CD4-positive, alpha-beta T cell (primary cell): ENCODE measurements at regions of chr1 and their contacts with region 1.

Region 1: GRCh38 chr1:172917972-172918371 is 132.8 kb downstream of the TNFSF18 start:
- DNase-seq: no peak
- ATAC-seq: no peak
- H3K4me3 ChIP-seq: no peak overlapping the region
- H3K4me3 Mint-ChIP-seq: no peak overlapping the region
- H3K27ac ChIP-seq: no peak overlapping the region
- H3K27ac Mint-ChIP-seq: no peak overlapping the region
- H3K4me1 ChIP-seq: no peaks in the 10 kb centered on the region
- H3K4me1 Mint-ChIP-seq: no peaks in the 10 kb centered on the region
- H3K27me3 ChIP-seq: no peaks in the 10 kb centered on the region
- H3K27me3 Mint-ChIP-seq: no peaks in the 10 kb centered on the region
- CTCF ChIP-seq: no peak

Region 2: DNA sequence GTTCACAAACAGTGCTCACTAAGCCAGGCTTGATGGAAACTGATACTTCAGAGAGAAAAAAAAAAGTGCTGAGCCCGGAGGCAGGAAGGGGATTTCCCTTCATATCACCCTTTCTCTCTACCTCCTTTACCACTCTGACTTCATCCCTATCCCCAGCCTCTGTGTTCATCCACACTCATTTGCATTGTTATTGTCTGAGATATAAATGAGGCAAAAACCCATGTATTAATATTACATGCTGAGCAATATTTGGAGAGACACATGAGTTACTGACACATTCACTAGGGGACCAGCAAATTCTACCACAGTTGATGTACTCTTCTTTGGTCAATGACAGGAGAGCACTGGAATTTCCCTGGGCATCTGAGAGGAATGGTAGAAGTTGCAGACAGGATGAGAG is 43.0 kb before region 1 on chr1:
- CTCF ChIA-PET with region 1: no interaction called
- POLR2A ChIA-PET with region 1: no interaction called
- intact Hi-C with region 1: loop called in 1 of 2 experiments (anchors 5 kb)
- DNase-seq: peak in 2 of 14 experiments; percentile 22 to 32
- ATAC-seq: peak; percentile 56
- H3K4me3 ChIP-seq: no peak overlapping the region
- H3K4me3 Mint-ChIP-seq: no peak overlapping the region
- H3K27ac ChIP-seq: no peak overlapping the region
- H3K27ac Mint-ChIP-seq: no peak overlapping the region
- H3K4me1 ChIP-seq: peaks cover 5% of the 10 kb centered on the region
- H3K4me1 Mint-ChIP-seq: peaks cover 18% of the 10 kb centered on the region
- H3K27me3 ChIP-seq: no peaks in the 10 kb centered on the region
- H3K27me3 Mint-ChIP-seq: no peaks in the 10 kb centered on the region
- CTCF ChIP-seq: no peak